ENCODE measurements at regions of chr16 and their contacts with region 1.

Region 1: GRCh38 chr16:24504472-24505345 is 34.7 kb upstream of the RBBP6 start:
- DNase-seq: peak; percentile 42
- H3K4me3 Mint-ChIP-seq: no peak overlapping the region
- H3K27ac Mint-ChIP-seq: no peak overlapping the region
- H3K4me1 Mint-ChIP-seq: no peaks in the 10 kb centered on the region
- H3K27me3 Mint-ChIP-seq: peaks cover 6% of the 10 kb centered on the region

Region 2: DNA sequence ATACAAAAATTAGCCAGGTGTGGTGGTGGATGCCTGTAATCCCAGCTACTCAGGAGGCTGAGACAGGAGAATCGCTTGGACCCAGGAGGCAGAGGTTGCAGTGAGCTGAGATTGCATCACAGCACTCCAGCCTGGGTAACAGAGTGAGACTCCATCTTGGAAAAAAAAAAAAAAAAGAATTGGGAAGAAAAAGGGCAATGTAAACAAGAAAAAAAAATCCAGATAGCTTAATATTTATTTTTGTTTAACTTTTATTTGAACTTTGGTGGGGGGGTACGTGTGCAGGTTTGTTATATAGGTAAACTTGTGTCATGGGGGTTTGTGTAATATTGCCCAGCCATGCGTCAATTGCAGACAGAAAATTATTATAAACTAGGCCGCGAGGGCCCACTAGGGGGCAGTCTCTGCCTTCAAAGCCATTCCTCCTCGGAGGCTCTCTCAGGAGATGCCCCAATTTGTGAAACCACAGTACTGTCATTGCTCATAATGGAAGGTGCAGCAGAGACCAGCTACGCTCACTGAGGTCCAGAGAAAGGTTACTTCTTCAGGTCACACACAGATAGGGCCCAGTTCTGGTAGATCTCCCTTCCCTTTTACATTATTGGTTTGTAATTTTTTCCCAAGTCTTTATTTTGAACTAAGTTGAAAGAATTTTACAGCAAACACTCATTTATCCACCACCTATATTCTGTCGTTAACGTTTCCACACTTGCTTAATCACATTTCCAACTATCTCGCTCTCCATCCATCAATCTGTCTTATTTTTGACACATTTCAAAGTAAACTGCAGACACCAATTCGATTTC is 462.7 kb before region 1 on chr16:
- intact Hi-C with region 1: loop called (anchors 1 kb)
- DNase-seq: peak; percentile 67
- H3K4me3 Mint-ChIP-seq: no peak overlapping the region
- H3K27ac Mint-ChIP-seq: no peak overlapping the region
- H3K4me1 Mint-ChIP-seq: peaks cover 7% of the 10 kb centered on the region
- H3K27me3 Mint-ChIP-seq: no peaks in the 10 kb centered on the region

Region 3: DNA sequence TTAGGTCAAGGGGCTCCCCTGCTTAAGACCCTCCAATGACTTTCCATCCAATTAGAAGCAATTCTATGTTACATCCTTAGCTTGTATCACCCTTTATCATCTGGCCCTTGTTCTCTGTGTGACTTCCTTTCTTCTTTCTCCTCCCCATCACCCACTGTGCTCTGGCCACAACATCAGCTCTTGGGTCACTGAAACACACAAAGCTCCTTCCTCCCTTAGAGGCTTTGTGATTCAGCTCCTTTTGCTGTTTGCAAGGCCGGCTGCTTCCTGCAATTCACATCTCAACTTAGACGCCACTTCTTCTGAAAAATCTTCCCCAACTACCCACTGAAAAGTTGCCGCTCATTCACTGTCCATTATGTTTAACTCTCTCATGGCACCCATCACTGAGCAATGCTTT is 379.5 kb before region 1 on chr16:
- intact Hi-C with region 1: no loop called
- DNase-seq: no peak
- H3K4me3 Mint-ChIP-seq: no peak overlapping the region
- H3K27ac Mint-ChIP-seq: no peak overlapping the region
- H3K4me1 Mint-ChIP-seq: peaks cover 4% of the 10 kb centered on the region
- H3K27me3 Mint-ChIP-seq: no peaks in the 10 kb centered on the region

Region 4: GRCh38 chr16:24452724-24453123 is 52.0 kb before region 1 on chr16:
- intact Hi-C with region 1: no loop called
- DNase-seq: no peak
- H3K4me3 Mint-ChIP-seq: no peak overlapping the region
- H3K27ac Mint-ChIP-seq: no peak overlapping the region
- H3K4me1 Mint-ChIP-seq: no peaks in the 10 kb centered on the region
- H3K27me3 Mint-ChIP-seq: peaks cover 1% of the 10 kb centered on the region

Region 5: GRCh38 chr16:24553983-24554382 is 49.3 kb after region 1 on chr16:
- intact Hi-C with region 1: no loop called
- DNase-seq: no peak
- H3K4me3 Mint-ChIP-seq: no peak overlapping the region
- H3K27ac Mint-ChIP-seq: no peak overlapping the region
- H3K4me1 Mint-ChIP-seq: peaks cover 21% of the 10 kb centered on the region
- H3K27me3 Mint-ChIP-seq: no peaks in the 10 kb centered on the region

Measured in activated T-helper 2 cell treated with anti-CD3 and anti-CD28 coated beads, Interferon-gamma antibody, Interleukin-2, Interleukin-4, amounts not matched to agents 10 μg/mL and 5 μg/mL and 100 μg/mL, durations not matched to agents 14 hours and 24 hours and 36 hours (primary cell).